Gastrocnemius medialis (tissue), 4 donors: ENCODE measurements at regions of chr9 and their contacts with region 1.

Region 1: DNA sequence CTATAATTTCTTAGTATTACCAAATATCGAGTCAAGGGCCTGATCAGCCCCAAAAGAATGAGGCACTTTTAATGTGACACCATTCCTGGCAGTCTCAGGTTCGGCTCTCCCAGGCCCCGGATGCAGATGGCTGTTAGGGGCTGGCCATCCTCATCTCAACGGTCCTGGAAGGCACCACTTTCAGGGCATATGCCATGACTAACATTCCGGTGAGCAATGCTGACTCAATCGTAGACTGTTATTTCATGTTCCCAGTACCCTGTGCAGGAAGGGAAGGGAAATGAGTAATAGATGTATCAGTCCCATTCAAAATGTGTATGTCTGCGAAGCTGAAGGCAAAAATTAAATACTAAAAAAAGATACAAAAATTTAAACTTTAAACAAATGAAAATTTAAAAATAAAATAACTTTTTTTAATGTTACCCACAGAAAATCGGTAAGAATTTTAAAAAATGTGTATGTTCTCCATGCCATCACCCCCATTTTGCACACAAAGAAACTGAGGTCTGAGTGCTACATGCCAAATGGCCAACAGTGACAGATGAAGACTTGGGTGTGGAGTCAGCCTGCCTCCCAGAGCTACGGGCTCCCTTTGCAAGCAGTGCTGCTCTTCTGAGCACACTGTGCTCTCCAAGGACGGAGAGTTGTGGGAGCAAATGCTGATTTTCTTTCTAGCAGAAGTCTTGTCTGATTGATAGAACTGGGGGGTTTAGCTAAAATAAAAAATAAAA is 79.0 kb downstream of the GLDC start:
- DNase-seq: no peak
- ATAC-seq: no peak
- H3K4me3 ChIP-seq: no peak overlapping the region
- H3K27ac ChIP-seq: no peak overlapping the region
- H3K4me1 ChIP-seq: no peaks in the 10 kb centered on the region
- H3K27me3 ChIP-seq: no peaks in the 10 kb centered on the region
- CTCF ChIP-seq: no peak
- POLR2A ChIP-seq: no peak

Region 2: DNA sequence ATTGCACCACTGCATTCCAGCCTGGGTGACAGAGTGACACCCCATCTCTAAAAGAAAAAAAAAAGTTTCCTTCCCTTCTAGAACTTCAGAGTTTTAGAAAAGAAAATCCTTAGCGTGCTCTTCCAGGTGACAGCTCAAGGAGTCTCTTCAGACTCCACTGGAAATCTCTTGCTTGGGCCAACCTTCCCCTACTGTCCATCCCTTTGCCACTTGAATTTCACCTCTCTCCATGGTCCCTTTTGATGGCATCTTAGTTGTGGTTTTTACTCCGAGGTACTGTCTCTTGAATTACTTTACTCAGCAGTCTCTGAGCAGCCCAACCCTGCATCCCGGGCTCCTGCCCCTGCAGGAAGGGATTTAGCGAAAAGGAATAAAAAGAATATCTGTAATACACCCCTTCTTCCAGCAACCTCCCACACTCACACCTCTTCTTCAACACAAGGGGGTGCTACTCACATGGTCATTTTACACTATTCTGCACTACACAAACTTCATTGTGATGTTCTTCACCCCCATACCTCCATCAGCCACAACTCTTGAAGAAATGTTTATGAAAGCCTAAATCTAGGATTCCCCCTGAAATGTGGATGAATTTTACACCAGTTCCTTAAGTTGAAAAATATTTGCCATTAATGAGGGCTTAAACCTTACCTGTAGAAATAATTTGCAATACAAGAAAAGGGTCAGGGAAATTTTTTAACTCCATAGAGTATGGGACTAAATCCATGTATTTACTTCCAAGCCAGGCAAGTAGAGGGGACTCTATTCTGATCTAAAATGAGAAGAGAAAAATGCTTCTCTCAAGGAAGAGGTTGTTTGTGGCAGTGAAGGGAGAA is 212.5 kb before region 1 on chr9:
- in situ Hi-C with region 1: loop called in 2 of 4 experiments (anchors 5 to 10 kb)
- intact Hi-C with region 1: loop called (anchors 1 kb)
- DNase-seq: no peak
- ATAC-seq: peak; percentile 63 to 68
- H3K4me3 ChIP-seq: no peak overlapping the region
- H3K27ac ChIP-seq: no peak overlapping the region
- H3K4me1 ChIP-seq: no peaks in the 10 kb centered on the region
- H3K27me3 ChIP-seq: no peaks in the 10 kb centered on the region
- CTCF ChIP-seq: peak; percentile 51 to 74 (median 60)
- POLR2A ChIP-seq: no peak

Region 3: GRCh38 chr9:6367128-6367890 is 199.3 kb before region 1 on chr9:
- in situ Hi-C with region 1: loop called in 2 of 4 experiments (anchors 10 kb)
- intact Hi-C with region 1: no loop called
- DNase-seq: no peak
- ATAC-seq: no peak
- H3K4me3 ChIP-seq: no peak overlapping the region
- H3K27ac ChIP-seq: no peak overlapping the region
- H3K4me1 ChIP-seq: no peaks in the 10 kb centered on the region
- H3K27me3 ChIP-seq: no peaks in the 10 kb centered on the region
- CTCF ChIP-seq: no peak
- POLR2A ChIP-seq: no peak

Region 4: GRCh38 chr9:6484210-6484609 is 82.4 kb before region 1 on chr9:
- in situ Hi-C with region 1: no loop called
- intact Hi-C with region 1: no loop called
- DNase-seq: no peak
- ATAC-seq: no peak
- H3K4me3 ChIP-seq: no peak overlapping the region
- H3K27ac ChIP-seq: no peak overlapping the region
- H3K4me1 ChIP-seq: no peaks in the 10 kb centered on the region
- H3K27me3 ChIP-seq: no peaks in the 10 kb centered on the region
- CTCF ChIP-seq: no peak
- POLR2A ChIP-seq: no peak

Region 5: DNA sequence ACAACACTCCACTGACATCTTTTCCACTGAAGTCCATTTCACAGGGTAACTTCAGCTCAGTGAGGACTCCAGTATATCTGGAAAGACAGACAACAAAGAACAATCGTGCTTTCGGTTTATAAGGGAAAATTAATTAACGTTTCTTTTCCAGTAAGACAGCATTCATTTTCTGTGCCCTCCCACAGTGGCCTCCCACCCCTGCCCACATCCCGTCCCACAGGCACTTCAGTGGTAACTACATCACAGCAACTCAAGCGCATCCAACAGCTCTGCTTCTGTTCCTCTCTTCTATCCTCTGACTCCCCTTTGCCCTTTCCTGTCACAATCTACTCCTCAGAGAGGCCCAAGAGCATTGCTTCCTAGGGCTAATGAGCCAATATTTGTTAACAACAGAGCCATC is 38.6 kb after region 1 on chr9:
- in situ Hi-C with region 1: no loop called
- intact Hi-C with region 1: no loop called
- DNase-seq: no peak
- ATAC-seq: no peak
- H3K4me3 ChIP-seq: no peak overlapping the region
- H3K27ac ChIP-seq: no peak overlapping the region
- H3K4me1 ChIP-seq: no peaks in the 10 kb centered on the region
- H3K27me3 ChIP-seq: no peaks in the 10 kb centered on the region
- CTCF ChIP-seq: no peak
- POLR2A ChIP-seq: no peak

Region 6: GRCh38 chr9:6628704-6629103 is 62.1 kb after region 1 on chr9:
- in situ Hi-C with region 1: no loop called
- intact Hi-C with region 1: no loop called
- DNase-seq: no peak
- ATAC-seq: no peak
- H3K4me3 ChIP-seq: no peak overlapping the region
- H3K27ac ChIP-seq: no peak overlapping the region
- H3K4me1 ChIP-seq: no peaks in the 10 kb centered on the region
- H3K27me3 ChIP-seq: no peaks in the 10 kb centered on the region
- CTCF ChIP-seq: no peak
- POLR2A ChIP-seq: no peak